ENCODE measurements at regions of chr11 and their contacts with region 1.

Region 1: DNA sequence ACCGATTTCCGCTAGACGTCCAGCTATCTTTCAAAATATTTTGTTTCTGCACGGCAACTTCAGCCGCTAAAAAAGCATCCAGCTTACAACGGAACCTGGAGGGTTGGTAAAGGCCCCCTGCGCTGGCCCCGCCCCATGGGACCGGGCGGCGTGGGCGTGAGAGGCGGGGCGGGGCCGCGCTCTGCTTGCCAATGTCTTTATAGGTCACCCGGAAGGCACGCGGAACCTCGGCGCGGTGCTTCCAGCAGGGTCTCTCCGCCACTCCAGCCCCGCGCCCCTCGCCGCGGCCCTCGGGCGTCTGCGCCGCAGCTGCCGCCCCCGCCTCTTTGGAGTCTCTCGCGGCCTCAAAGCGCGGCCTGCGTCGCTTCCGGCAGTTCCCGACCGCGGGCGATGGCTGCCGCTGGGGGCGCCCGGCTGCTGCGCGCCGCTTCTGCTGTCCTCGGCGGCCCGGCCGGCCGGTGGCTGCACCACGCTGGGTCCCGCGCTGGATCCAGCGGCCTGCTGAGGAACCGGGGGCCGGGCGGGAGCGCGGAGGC is at the start of gene FDX1:
- DNase-seq: peak; percentile 96
- H3K4me3 ChIP-seq: peak within 1 kb of the TSS; percentile 91
- H3K27ac ChIP-seq: peak within 1 kb of the TSS; percentile 93
- H3K4me1 ChIP-seq: peaks cover 44% of the 10 kb centered on the region
- H3K27me3 ChIP-seq: no peaks in the 10 kb centered on the region
- CTCF ChIP-seq: peak; percentile 52
- total RNA-seq, gene FDX1: 59.5 and 62.3 TPM in 2 replicates

Region 2: GRCh38 chr11:109960831-109961230 is 469.0 kb before region 1 on chr11:
- CTCF ChIA-PET with region 1: no interaction called
- POLR2A ChIA-PET with region 1: no interaction called
- intact Hi-C with region 1: no loop called
- DNase-seq: no peak
- H3K4me3 ChIP-seq: no peak overlapping the region
- H3K27ac ChIP-seq: no peak overlapping the region
- H3K4me1 ChIP-seq: peaks cover 37% of the 10 kb centered on the region
- H3K27me3 ChIP-seq: no peaks in the 10 kb centered on the region
- CTCF ChIP-seq: no peak

Region 3: GRCh38 chr11:110200241-110200640 is 229.6 kb before region 1 on chr11:
- CTCF ChIA-PET with region 1: interaction called, 27 read pairs
- POLR2A ChIA-PET with region 1: interaction called, 4 read pairs
- intact Hi-C with region 1: loop called (anchors 1 kb)
- DNase-seq: no peak
- H3K4me3 ChIP-seq: no peak overlapping the region
- H3K27ac ChIP-seq: peak overlapping the region; percentile 16
- H3K4me1 ChIP-seq: peaks cover 38% of the 10 kb centered on the region
- H3K27me3 ChIP-seq: no peaks in the 10 kb centered on the region
- CTCF ChIP-seq: no peak

Region 4: GRCh38 chr11:110356756-110357671 is 72.8 kb before region 1 on chr11:
- CTCF ChIA-PET with region 1: no interaction called
- POLR2A ChIA-PET with region 1: no interaction called
- intact Hi-C with region 1: loop called (anchors 2 kb)
- DNase-seq: peak; percentile 82
- H3K4me3 ChIP-seq: peak overlapping the region; percentile 52
- H3K27ac ChIP-seq: peak overlapping the region; percentile 99
- H3K4me1 ChIP-seq: peaks cover 13% of the 10 kb centered on the region
- H3K27me3 ChIP-seq: no peaks in the 10 kb centered on the region
- CTCF ChIP-seq: no peak

Region 5: DNA sequence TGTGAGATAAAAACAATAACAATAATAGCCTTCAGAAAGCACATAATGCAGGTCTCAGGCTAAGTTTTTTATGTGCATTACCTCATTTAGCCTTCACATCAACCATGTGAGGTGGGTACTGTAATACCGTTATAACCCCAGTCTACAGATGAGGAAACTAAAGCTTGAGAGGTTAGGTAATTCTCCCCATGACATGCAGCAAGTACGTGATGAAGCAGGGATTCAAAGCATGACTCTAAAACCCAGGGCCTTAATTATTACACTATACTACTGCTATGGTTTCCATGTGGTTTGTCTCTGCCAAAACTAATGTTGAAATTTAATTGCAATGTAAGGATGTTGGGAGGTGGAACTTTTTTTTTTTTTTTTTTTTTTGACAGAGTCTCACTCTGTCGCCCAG is 37.7 kb before region 1 on chr11:
- CTCF ChIA-PET with region 1: no interaction called
- POLR2A ChIA-PET with region 1: interaction called, 4 read pairs
- intact Hi-C with region 1: loop called (anchors 5 kb)
- DNase-seq: no peak
- H3K4me3 ChIP-seq: no peak overlapping the region
- H3K27ac ChIP-seq: no peak overlapping the region
- H3K4me1 ChIP-seq: peaks cover 7% of the 10 kb centered on the region
- H3K27me3 ChIP-seq: no peaks in the 10 kb centered on the region
- CTCF ChIP-seq: no peak

Measured in A673 (cell line).